Dendritic cell treated with granulocyte-macrophage colony-stimulating factor and Interleukin-4, amounts not matched to agents 40 ng/mL and 50 ng/mL, for 4 days (primary cell): ENCODE measurements at regions of chr2 and their contacts with region 1.

Region 1: DNA sequence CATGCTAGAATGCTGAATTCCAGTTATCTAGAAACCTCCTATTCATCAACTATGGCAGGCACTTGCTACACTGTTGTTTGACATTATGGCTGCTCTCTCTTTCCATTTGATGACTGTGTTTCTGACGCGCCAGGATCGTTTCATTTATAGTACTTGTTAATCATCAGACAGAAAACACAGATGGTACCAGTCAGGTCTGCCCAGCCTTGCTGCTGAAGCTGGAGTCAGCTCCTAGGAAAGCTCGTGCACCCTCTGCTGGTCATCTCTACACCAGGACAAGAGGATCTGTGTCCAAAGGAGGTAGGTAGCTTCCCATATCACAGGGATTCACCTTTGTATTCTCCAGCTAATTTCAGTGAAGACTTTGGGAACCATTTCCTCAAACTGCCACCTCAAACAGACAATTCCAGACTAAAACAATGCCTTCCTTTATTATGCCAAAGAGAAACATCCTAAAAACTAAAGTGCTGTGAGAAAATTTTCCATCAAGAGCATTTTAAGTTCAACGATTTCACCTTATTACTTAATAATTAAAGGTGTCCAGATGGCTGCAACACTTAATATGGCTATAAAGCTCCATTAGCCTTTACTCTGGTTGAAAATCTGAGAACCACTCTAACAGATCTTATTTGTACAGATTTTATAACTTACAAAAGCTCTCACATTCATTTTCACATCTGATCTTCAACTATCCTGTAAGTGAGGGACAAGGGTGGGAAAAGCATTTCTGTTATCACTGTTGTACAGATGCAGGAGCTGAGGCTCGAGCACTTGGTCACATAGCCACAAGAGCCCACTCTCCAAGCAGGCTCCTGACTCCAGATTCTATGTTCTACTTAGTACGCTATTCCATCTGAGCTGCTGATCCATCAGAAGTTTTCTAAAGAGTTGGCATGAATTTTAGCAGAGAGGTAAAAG is 17.5 kb downstream of the METTL8 start:
- H3K4me3 Mint-ChIP-seq: no peak overlapping the region
- H3K27ac Mint-ChIP-seq: no peak overlapping the region
- H3K4me1 Mint-ChIP-seq: peaks cover 12% of the 10 kb centered on the region
- H3K27me3 Mint-ChIP-seq: no peaks in the 10 kb centered on the region

Region 2: DNA sequence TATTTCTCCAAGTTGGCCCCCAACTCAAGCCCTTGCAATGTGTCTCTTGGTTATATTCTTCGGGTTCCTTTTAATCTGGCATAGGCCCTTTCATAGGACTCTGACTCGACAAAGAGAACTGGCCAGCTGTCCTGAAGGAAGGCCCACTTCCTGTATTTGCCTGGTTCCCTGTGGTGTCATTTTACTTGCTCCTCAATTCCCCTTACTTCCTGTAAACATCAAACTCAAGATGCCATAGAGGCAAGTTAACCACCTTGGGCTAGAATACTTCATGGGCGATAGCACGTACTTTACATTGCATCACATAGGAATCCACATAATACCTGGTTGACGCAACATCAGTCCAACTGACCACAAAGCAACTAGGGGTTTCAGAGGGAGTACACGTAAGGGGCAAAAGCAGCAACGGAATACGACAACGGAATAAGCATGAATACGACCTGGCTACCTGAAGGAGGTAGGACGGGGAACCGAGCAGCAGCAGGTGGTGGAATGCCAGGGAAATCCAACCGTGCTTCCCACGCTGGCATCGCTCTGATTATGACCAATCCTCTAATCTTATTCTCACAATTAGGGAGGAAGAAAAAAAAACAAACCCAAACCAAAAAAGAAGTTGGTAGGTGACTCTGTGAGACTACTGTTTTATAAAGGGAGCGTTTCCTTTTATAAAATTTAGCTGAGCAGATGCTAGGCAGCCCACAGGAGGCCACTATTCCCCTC is 488.0 kb before region 1 on chr2:
- intact Hi-C with region 1: no loop called
- H3K4me3 Mint-ChIP-seq: peak overlapping the region; percentile 89
- H3K27ac Mint-ChIP-seq: peak overlapping the region; percentile 91
- H3K4me1 Mint-ChIP-seq: peaks cover 25% of the 10 kb centered on the region
- H3K27me3 Mint-ChIP-seq: no peaks in the 10 kb centered on the region

Region 3: DNA sequence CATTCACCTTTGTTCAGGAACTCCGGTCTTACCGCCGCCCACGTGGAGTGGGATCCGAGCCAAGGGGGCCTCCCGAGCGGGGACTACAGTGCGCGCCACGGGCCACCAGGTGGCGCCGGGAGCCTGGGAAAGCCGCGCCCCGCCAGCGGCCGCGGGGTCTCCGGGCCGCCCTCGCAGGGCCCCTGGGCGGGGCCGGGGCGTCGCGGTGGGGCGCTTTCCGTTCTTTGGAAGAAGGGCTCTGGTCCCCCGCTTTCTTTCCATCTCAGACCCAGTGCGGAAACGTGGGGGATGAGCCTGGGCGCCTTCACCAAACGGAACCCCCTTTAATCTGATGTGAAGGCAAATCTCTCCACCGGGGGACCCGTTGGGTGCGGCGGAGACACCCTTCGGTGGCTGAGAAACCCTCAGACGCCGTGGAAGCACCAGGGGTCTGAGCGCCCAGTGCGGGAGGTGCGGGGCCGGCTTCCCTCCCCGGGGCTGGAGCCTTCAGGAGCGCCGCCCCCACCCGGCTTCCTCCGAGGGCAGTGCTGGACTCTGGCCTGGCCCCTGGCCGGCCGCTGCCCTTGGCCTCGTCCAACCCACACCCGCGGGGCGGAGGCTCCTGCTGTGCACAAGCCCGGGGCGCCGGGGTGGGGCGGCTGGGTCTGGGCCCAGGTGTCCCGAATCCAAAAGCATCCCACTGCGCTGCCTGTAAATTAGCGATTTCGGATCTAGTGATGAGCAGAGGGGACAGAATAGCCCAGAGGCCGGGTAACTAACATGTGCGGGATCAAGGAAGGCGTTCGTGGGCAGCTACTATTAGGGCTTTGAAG is 442.6 kb before region 1 on chr2:
- intact Hi-C with region 1: loop called (anchors 1 kb)
- H3K4me3 Mint-ChIP-seq: peak overlapping the region; percentile 74
- H3K27ac Mint-ChIP-seq: peak overlapping the region; percentile 41
- H3K4me1 Mint-ChIP-seq: peaks cover 14% of the 10 kb centered on the region
- H3K27me3 Mint-ChIP-seq: peaks cover 22% of the 10 kb centered on the region

Region 4: GRCh38 chr2:171056307-171056706 is 360.0 kb before region 1 on chr2:
- intact Hi-C with region 1: loop called (anchors 10 kb)
- H3K4me3 Mint-ChIP-seq: no peak overlapping the region
- H3K27ac Mint-ChIP-seq: no peak overlapping the region
- H3K4me1 Mint-ChIP-seq: no peaks in the 10 kb centered on the region
- H3K27me3 Mint-ChIP-seq: no peaks in the 10 kb centered on the region

Region 5: GRCh38 chr2:171553858-171554257 is 137.6 kb after region 1 on chr2:
- intact Hi-C with region 1: no loop called
- H3K4me3 Mint-ChIP-seq: no peak overlapping the region
- H3K27ac Mint-ChIP-seq: no peak overlapping the region
- H3K4me1 Mint-ChIP-seq: no peaks in the 10 kb centered on the region
- H3K27me3 Mint-ChIP-seq: no peaks in the 10 kb centered on the region